WTC11 (cell line): ENCODE measurements at regions of chr7 and their contacts with region 1.

Region 1: GRCh38 chr7:29189743-29190201 is 4.8 kb upstream of the CHN2 start:
- DNase-seq: peak; percentile 97
- ATAC-seq: peak; percentile 87
- H3K4me3 Mint-ChIP-seq: peak overlapping the region; percentile 46
- H3K27ac Mint-ChIP-seq: peak overlapping the region; percentile 45; the same call in 1 of the 2 replicates
- H3K4me1 Mint-ChIP-seq: peaks cover 46% of the 10 kb centered on the region
- H3K27me3 Mint-ChIP-seq: peaks cover 48% of the 10 kb centered on the region
- CTCF ChIP-seq: peak; percentile 87

Region 2: GRCh38 chr7:28774261-28774988 is 415.3 kb before region 1 on chr7:
- CTCF ChIA-PET with region 1: no interaction called
- POLR2A ChIA-PET with region 1: no interaction called
- DNase-seq: no peak
- ATAC-seq: no peak
- H3K4me3 Mint-ChIP-seq: no peak overlapping the region
- H3K27ac Mint-ChIP-seq: no peak overlapping the region
- H3K4me1 Mint-ChIP-seq: no peaks in the 10 kb centered on the region
- H3K27me3 Mint-ChIP-seq: peaks cover 20% of the 10 kb centered on the region
- CTCF ChIP-seq: no peak

Region 3: GRCh38 chr7:29105752-29106668 is 83.8 kb before region 1 on chr7:
- CTCF ChIA-PET with region 1: interaction called, 24 read pairs
- POLR2A ChIA-PET with region 1: no interaction called
- DNase-seq: peak; percentile 34
- ATAC-seq: peak; percentile 86
- H3K4me3 Mint-ChIP-seq: no peak overlapping the region
- H3K27ac Mint-ChIP-seq: no peak overlapping the region
- H3K4me1 Mint-ChIP-seq: no peaks in the 10 kb centered on the region; the same call in 1 of the 2 replicates
- H3K27me3 Mint-ChIP-seq: no peaks in the 10 kb centered on the region
- CTCF ChIP-seq: peak; percentile 47

Region 4: GRCh38 chr7:29156907-29157452 is 32.8 kb before region 1 on chr7:
- CTCF ChIA-PET with region 1: interaction called, 27 read pairs
- POLR2A ChIA-PET with region 1: no interaction called
- DNase-seq: no peak
- ATAC-seq: peak; percentile 67; the same call in 1 of the 2 replicates
- H3K4me3 Mint-ChIP-seq: no peak overlapping the region
- H3K27ac Mint-ChIP-seq: no peak overlapping the region
- H3K4me1 Mint-ChIP-seq: peaks cover 13% of the 10 kb centered on the region
- H3K27me3 Mint-ChIP-seq: no peaks in the 10 kb centered on the region
- CTCF ChIP-seq: no peak

Region 5: GRCh38 chr7:29217113-29217512 is 27.3 kb after region 1 on chr7:
- CTCF ChIA-PET with region 1: interaction called, 31 read pairs
- POLR2A ChIA-PET with region 1: no interaction called
- DNase-seq: no peak
- ATAC-seq: peak; percentile 81
- H3K4me3 Mint-ChIP-seq: no peak overlapping the region
- H3K27ac Mint-ChIP-seq: no peak overlapping the region
- H3K4me1 Mint-ChIP-seq: peaks cover 20% of the 10 kb centered on the region
- H3K27me3 Mint-ChIP-seq: no peaks in the 10 kb centered on the region
- CTCF ChIP-seq: no peak

Region 6: GRCh38 chr7:29319719-29320521 is 130.1 kb after region 1 on chr7:
- CTCF ChIA-PET with region 1: interaction called, 13 read pairs
- POLR2A ChIA-PET with region 1: no interaction called
- DNase-seq: no peak
- ATAC-seq: no peak
- H3K4me3 Mint-ChIP-seq: no peak overlapping the region
- H3K27ac Mint-ChIP-seq: no peak overlapping the region; the same call in 1 of the 2 replicates
- H3K4me1 Mint-ChIP-seq: peaks cover 32% of the 10 kb centered on the region
- H3K27me3 Mint-ChIP-seq: no peaks in the 10 kb centered on the region; the same call in 1 of the 2 replicates
- CTCF ChIP-seq: no peak

Region 7: DNA sequence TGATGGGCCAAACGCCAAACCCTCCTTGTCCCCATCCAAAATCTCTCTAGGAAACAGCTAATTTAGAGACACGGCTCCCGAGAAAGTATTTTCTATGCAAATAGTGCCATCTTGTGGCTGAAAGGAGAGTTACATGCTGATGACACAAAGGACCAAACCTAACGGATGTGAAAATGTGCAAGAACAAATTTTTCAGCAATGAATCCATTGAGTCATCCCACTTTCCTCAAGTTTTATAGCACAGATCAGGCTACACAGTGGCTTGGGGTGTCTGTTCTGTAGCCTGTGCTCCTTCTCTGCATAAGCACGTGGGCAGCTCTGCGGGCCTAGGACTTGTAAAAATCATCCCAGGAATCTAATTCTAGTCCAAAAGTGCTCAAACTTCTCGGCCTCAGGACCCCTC is 219.1 kb after region 1 on chr7:
- CTCF ChIA-PET with region 1: interaction called, 31 read pairs
- POLR2A ChIA-PET with region 1: interaction called, 3 read pairs
- DNase-seq: peak; percentile 34
- ATAC-seq: peak; percentile 60
- H3K4me3 Mint-ChIP-seq: peak overlapping the region; percentile 33; the same call in 1 of the 2 replicates
- H3K27ac Mint-ChIP-seq: no peak overlapping the region
- H3K4me1 Mint-ChIP-seq: peaks cover 19% of the 10 kb centered on the region
- H3K27me3 Mint-ChIP-seq: no peaks in the 10 kb centered on the region
- CTCF ChIP-seq: peak; percentile 84